Aorta (tissue), 5 donors: ENCODE measurements at regions of chr5 and their contacts with region 1.

Region 1: GRCh38 chr5:33423018-33423630 is 17.6 kb upstream of the TARS1 start:
- DNase-seq: no peak
- ATAC-seq: peak; percentile 60
- H3K4me3 ChIP-seq: no peak overlapping the region
- H3K27ac ChIP-seq: no peak overlapping the region
- H3K4me1 ChIP-seq: no peaks in the 10 kb centered on the region
- H3K27me3 ChIP-seq: no peaks in the 10 kb centered on the region

Region 2: GRCh38 chr5:33180900-33181299 is 242.2 kb before region 1 on chr5:
- intact Hi-C with region 1: loop called in 1 of 2 experiments (anchors 2 kb)
- DNase-seq: no peak
- ATAC-seq: no peak
- H3K4me3 ChIP-seq: no peak overlapping the region
- H3K27ac ChIP-seq: no peak overlapping the region
- H3K4me1 ChIP-seq: no peaks in the 10 kb centered on the region
- H3K27me3 ChIP-seq: no peaks in the 10 kb centered on the region

Region 3: DNA sequence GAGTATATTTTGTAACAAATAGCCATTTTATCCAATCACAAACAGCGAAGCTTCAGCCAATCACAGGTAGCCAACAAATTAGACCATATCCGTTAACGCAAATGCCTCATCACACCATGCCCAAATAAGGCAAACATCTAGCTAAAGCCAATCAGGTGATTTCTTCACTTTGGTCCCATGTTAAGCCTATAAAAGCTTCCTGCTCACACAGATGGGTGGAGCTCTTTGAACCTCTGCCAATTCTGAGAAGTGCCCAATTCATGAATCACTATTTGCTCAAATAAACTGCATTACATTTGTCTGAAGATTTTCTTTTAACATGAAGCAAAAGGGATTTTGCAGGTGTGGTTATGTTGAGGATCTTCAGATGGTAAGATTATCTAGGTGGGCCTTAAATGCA is 110.0 kb before region 1 on chr5:
- intact Hi-C with region 1: loop called (anchors 10 kb)
- DNase-seq: no peak
- ATAC-seq: no peak
- H3K4me3 ChIP-seq: no peak overlapping the region
- H3K27ac ChIP-seq: no peak overlapping the region
- H3K4me1 ChIP-seq: peaks cover 0 to 5% of the 10 kb centered on the region in 2 donors
- H3K27me3 ChIP-seq: no peaks in the 10 kb centered on the region

Region 4: DNA sequence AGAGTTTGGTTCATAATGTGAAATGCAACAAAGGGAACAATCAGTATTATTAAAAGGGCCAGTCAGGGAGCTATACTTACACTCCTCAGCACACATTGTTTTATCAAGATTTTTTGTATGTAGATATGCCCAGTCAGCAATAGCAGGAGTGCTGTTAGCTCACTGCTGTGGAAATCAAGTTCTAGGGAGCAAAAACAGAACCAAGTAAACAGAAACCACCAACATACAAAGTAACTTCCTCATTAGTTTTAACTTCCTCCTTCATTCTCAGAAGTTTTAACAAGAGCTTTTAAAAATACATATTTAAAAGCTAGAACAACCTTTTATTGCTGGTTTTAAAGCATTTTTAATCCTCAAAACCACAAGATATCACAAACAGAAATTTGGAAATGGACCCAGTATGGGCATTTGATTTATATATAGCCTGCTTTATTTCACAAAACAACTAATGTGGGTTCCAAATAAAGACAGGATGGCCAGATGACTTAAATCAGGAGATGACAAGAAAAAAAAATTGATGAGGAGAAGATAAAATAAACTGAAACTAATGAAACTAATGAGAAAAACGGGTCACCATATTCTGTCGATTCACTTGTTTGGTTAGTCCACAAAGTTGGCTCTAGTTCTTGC is 290.1 kb after region 1 on chr5:
- intact Hi-C with region 1: no loop called
- DNase-seq: no peak
- ATAC-seq: no peak
- H3K4me3 ChIP-seq: no peak overlapping the region
- H3K27ac ChIP-seq: no peak overlapping the region
- H3K4me1 ChIP-seq: peaks cover 0 to 5% of the 10 kb centered on the region in 2 donors
- H3K27me3 ChIP-seq: no peaks in the 10 kb centered on the region